IMR-90 (cell line): ENCODE measurements at regions of chr14 and their contacts with region 1.

Region 1: GRCh38 chr14:30005114-30005808 is 77.6 kb upstream of the PRKD1 start:
- DNase-seq: peak; percentile 89
- ATAC-seq: peak; percentile 98
- H3K4me3 ChIP-seq: no peak overlapping the region
- H3K27ac ChIP-seq: no peak overlapping the region
- H3K4me1 ChIP-seq: no peaks in the 10 kb centered on the region
- H3K27me3 ChIP-seq: no peaks in the 10 kb centered on the region
- CTCF ChIP-seq: peak; percentile 87
- POLR2A ChIP-seq: no peak
- RAD21 ChIP-seq: peak; percentile 91

Region 2: GRCh38 chr14:28756884-28757570 is 1248.2 kb before region 1 on chr14:
- CTCF ChIA-PET with region 1: no interaction called
- POLR2A ChIA-PET with region 1: no interaction called
- dilution Hi-C with region 1: no loop called
- in situ Hi-C with region 1: loop called (anchors 25 kb)
- intact Hi-C with region 1: loop called (anchors 5 kb)
- DNase-seq: peak; percentile 54
- ATAC-seq: peak; percentile 59; the same call in 1 of the 2 replicates
- H3K4me3 ChIP-seq: peak overlapping the region; percentile 13; the same call in 1 of the 2 replicates
- H3K27ac ChIP-seq: no peak overlapping the region
- H3K4me1 ChIP-seq: no peaks in the 10 kb centered on the region
- H3K27me3 ChIP-seq: peaks cover 68% of the 10 kb centered on the region
- CTCF ChIP-seq: peak; percentile 68
- POLR2A ChIP-seq: no peak
- RAD21 ChIP-seq: peak; percentile 51

Region 3: DNA sequence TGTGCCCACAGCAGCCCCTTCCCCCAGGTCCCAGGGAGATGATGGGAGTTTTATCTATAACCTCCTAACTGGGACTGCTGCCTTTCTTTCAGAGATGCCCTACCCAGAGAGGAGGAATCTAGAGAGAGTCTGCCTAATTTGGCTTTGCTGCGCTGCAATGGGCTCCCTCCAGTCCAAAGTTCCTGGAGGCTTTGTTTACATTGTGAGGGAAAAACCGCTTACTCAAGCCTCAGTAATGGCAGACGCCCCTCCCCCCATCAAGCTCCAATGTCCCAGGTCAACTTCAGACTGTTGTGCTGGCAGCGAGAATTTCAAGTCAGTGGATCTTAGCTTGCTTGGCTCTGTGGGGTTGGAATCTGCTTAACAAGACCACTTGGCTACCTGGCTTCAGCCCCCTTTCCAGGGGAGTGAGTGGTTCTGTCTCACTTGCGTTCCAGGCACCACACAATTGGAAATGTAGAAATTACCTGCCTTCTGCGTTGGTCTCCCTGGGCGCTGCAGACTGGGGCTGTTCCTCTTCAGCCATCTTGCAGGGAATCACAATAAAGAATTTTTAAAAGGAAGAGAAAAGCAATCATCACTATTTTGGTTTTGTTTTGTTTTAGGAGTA is 976.2 kb before region 1 on chr14:
- CTCF ChIA-PET with region 1: no interaction called
- POLR2A ChIA-PET with region 1: no interaction called
- dilution Hi-C with region 1: no loop called
- in situ Hi-C with region 1: no loop called
- intact Hi-C with region 1: loop called (anchors 10 kb)
- DNase-seq: peak; percentile 50
- ATAC-seq: peak; percentile 77
- H3K4me3 ChIP-seq: no peak overlapping the region
- H3K27ac ChIP-seq: peak overlapping the region; percentile 9; the same call in 1 of the 2 replicates
- H3K4me1 ChIP-seq: peaks cover 7% of the 10 kb centered on the region
- H3K27me3 ChIP-seq: no peaks in the 10 kb centered on the region
- CTCF ChIP-seq: no peak
- POLR2A ChIP-seq: no peak
- RAD21 ChIP-seq: no peak

Region 4: DNA sequence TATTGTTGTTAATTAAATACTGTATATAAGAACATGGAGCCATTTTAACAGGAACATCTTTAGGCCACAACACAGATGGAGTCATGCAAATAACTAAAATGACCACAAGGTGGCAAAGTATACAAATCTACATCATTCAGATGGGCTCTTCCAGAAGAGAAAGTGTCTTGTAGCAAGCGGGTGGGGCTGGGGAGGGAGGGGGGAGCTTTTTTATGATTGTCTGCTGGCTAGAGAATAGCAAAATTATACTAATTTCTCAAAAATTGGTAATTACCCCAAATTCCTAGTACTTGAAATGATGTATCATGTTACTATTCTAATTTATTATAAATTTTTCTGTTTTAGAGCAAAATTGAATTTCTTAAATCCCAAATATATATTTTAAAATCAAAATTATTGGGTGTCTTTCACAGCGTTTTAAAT is 456.3 kb before region 1 on chr14:
- CTCF ChIA-PET with region 1: no interaction called
- POLR2A ChIA-PET with region 1: no interaction called
- dilution Hi-C with region 1: no loop called
- in situ Hi-C with region 1: loop called (anchors 5 kb)
- intact Hi-C with region 1: loop called (anchors 1 kb)
- DNase-seq: peak; percentile 77
- ATAC-seq: peak; percentile 89
- H3K4me3 ChIP-seq: no peak overlapping the region
- H3K27ac ChIP-seq: no peak overlapping the region
- H3K4me1 ChIP-seq: no peaks in the 10 kb centered on the region
- H3K27me3 ChIP-seq: 0 out of 2 replicates have a peak, but pooled peaks cover 2% of the 10 kb centered on the region
- CTCF ChIP-seq: peak; percentile 67
- POLR2A ChIP-seq: no peak
- RAD21 ChIP-seq: peak; percentile 73

Region 5: DNA sequence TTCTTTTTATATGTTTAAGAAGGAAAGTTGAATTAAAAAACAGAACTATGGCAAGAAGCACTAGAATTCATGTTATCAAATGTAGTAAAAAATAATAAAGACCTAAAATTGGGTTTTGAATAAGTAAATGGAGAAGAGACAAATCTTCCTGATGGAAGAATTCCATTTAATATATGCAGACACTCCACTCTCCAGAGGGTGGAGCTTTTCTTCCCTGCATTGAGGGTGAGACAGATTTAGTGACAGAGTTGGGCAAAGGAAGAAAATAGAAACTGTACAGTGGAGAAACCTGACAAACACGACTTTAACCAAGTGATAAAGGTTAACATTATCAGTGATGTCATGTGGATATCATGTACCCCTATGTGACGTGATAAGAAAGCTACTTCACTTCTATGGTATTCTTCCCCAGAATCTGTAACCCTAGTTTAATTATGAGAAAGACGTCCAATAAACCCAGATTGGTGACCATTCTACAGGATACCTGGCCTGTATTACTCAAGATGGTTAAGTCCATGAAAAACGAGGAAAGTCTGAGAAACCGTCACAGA is 295.2 kb before region 1 on chr14:
- CTCF ChIA-PET with region 1: no interaction called
- POLR2A ChIA-PET with region 1: no interaction called
- dilution Hi-C with region 1: no loop called
- in situ Hi-C with region 1: no loop called
- intact Hi-C with region 1: loop called (anchors 5 kb)
- DNase-seq: peak; percentile 7
- ATAC-seq: no peak
- H3K4me3 ChIP-seq: no peak overlapping the region
- H3K27ac ChIP-seq: no peak overlapping the region
- H3K4me1 ChIP-seq: no peaks in the 10 kb centered on the region
- H3K27me3 ChIP-seq: no peaks in the 10 kb centered on the region
- CTCF ChIP-seq: peak; percentile 33; the same call in 1 of the 2 replicates
- POLR2A ChIP-seq: no peak
- RAD21 ChIP-seq: peak; percentile 32; the same call in 1 of the 2 replicates

Region 6: GRCh38 chr14:29982993-29983392 is 22.3 kb before region 1 on chr14:
- CTCF ChIA-PET with region 1: no interaction called
- POLR2A ChIA-PET with region 1: no interaction called
- dilution Hi-C with region 1: no loop called
- in situ Hi-C with region 1: no loop called
- intact Hi-C with region 1: no loop called
- DNase-seq: no peak
- ATAC-seq: no peak
- H3K4me3 ChIP-seq: no peak overlapping the region
- H3K27ac ChIP-seq: no peak overlapping the region
- H3K4me1 ChIP-seq: no peaks in the 10 kb centered on the region
- H3K27me3 ChIP-seq: no peaks in the 10 kb centered on the region
- CTCF ChIP-seq: no peak
- POLR2A ChIP-seq: no peak
- RAD21 ChIP-seq: no peak

Region 7: DNA sequence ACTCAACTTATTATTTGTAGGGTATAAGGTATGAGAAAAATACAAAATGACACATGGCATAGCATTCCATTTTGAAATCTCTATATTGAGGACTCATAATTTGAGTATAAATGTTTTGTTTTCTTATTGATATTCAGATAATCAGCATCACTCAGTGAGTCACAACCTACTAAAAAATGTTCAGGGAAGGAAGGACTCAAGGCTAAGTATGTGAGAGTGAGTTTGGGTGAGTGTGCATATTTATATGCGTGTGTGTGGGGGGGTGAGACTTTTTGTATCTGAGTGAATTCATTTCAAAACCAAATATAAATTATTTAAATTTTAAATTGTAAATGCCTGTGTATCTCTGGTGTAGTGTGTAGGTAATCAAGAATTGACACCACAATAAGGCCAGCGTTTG is 10.2 kb after region 1 on chr14:
- CTCF ChIA-PET with region 1: no interaction called
- POLR2A ChIA-PET with region 1: no interaction called
- dilution Hi-C with region 1: no loop called
- in situ Hi-C with region 1: no loop called
- intact Hi-C with region 1: no loop called
- DNase-seq: peak; percentile 30
- ATAC-seq: peak; percentile 24; the same call in 1 of the 2 replicates
- H3K4me3 ChIP-seq: no peak overlapping the region
- H3K27ac ChIP-seq: no peak overlapping the region
- H3K4me1 ChIP-seq: no peaks in the 10 kb centered on the region; the same call in 1 of the 2 replicates
- H3K27me3 ChIP-seq: no peaks in the 10 kb centered on the region
- CTCF ChIP-seq: no peak
- POLR2A ChIP-seq: no peak
- RAD21 ChIP-seq: no peak

Region 8: DNA sequence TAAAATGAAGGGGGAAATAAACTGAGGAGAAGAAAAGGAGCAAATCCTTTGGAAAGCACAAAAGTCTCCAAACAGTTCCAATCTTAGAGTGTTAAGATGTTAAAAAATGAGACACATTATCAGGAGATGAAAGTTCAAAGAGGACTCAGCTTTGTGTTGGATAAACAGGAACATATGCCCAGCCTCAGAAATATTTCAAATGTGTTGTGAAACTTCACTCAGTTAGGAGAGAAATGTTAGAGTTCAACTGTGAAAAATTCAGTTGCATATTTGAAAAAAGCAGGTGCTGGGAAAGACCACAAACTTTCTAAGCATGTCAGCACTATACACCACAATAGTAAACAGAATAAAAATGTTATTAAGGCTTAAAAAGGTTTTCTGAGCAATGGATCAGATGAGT is 59.2 kb after region 1 on chr14:
- CTCF ChIA-PET with region 1: no interaction called
- POLR2A ChIA-PET with region 1: no interaction called
- dilution Hi-C with region 1: no loop called
- in situ Hi-C with region 1: no loop called
- intact Hi-C with region 1: no loop called
- DNase-seq: peak; percentile 6
- ATAC-seq: peak; percentile 46
- H3K4me3 ChIP-seq: no peak overlapping the region
- H3K27ac ChIP-seq: no peak overlapping the region
- H3K4me1 ChIP-seq: no peaks in the 10 kb centered on the region; the same call in 1 of the 2 replicates
- H3K27me3 ChIP-seq: no peaks in the 10 kb centered on the region
- CTCF ChIP-seq: no peak
- POLR2A ChIP-seq: no peak
- RAD21 ChIP-seq: no peak

Region 9: GRCh38 chr14:30194741-30195148 is 189.5 kb after region 1 on chr14:
- CTCF ChIA-PET with region 1: no interaction called
- POLR2A ChIA-PET with region 1: no interaction called
- dilution Hi-C with region 1: no loop called
- in situ Hi-C with region 1: no loop called
- intact Hi-C with region 1: loop called (anchors 5 kb)
- DNase-seq: peak; percentile 91
- ATAC-seq: peak; percentile 55
- H3K4me3 ChIP-seq: no peak overlapping the region
- H3K27ac ChIP-seq: peak overlapping the region; percentile 82
- H3K4me1 ChIP-seq: peaks cover 13% of the 10 kb centered on the region
- H3K27me3 ChIP-seq: no peaks in the 10 kb centered on the region
- CTCF ChIP-seq: no peak
- POLR2A ChIP-seq: no peak
- RAD21 ChIP-seq: no peak

Region 10: DNA sequence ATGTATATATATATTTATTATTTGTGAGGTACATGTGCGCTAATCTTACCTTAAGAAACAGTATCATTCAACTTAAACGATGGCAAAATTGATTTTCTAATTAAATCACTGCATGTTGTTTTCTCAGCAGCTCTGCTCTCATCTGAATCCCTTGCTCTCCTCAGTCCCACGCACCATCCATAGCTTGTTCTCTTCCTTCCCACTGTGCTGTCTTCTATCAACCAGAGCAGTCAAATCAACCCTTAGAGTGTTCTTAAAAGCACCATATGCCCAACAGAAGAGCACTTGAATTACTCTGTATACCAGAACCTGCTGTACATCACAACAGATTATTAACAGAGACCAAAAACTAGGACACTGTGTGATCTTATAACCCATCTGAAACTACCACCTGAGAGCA is 344.3 kb after region 1 on chr14:
- CTCF ChIA-PET with region 1: no interaction called
- POLR2A ChIA-PET with region 1: no interaction called
- dilution Hi-C with region 1: no loop called
- in situ Hi-C with region 1: no loop called
- intact Hi-C with region 1: no loop called
- DNase-seq: no peak
- ATAC-seq: no peak
- H3K4me3 ChIP-seq: no peak overlapping the region
- H3K27ac ChIP-seq: no peak overlapping the region
- H3K4me1 ChIP-seq: no peaks in the 10 kb centered on the region
- H3K27me3 ChIP-seq: no peaks in the 10 kb centered on the region; the same call in 1 of the 2 replicates
- CTCF ChIP-seq: no peak
- POLR2A ChIP-seq: no peak
- RAD21 ChIP-seq: no peak